ENCODE measurements at regions of chr13 and their contacts with region 1.

Region 1: DNA sequence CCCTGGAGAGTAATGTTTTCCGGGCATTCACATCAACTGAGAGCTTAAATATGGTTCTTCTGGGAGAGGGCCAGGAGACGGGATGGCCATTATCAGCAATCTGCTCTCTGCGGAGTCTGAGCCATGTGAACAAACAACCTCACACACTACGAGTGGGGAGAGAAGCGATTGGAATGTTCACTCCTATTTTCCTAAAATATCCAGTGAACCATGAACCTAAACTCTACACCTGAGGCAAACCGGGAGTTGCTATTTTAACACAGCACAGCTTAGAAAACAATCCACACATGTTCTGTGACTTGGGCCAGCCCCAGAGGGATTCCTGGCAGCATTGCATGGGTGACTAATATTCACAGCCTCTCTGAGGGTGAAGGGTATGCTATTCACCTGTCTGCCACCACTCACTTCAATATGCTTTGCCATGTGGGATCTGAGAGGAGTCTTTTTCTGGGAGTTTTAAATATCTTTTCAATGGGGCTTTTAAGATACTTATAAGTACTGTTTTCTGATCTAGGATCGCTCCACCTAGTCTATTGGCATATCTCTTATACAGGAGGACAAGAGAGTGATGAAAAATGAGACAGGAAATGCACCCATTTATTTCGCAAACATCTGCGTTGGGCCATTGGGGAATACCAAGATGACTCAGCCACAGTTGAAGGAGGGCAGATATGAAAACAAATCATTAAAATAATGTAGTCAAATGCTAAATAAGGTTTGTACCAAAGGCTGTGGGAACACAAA is 72.6 kb upstream of the SERP2 start:
- DNase-seq: peak; percentile 53 to 85
- H3K4me3 ChIP-seq: no peak overlapping the region
- H3K27ac ChIP-seq: peak overlapping the region; percentile 77 to 88
- H3K4me1 ChIP-seq: peaks cover 33 to 61% of the 10 kb centered on the region in 2 donors
- H3K27me3 ChIP-seq: no peaks in the 10 kb centered on the region
- CTCF ChIP-seq: no peak

Region 2: GRCh38 chr13:44237276-44237767 is 63.7 kb before region 1 on chr13:
- intact Hi-C with region 1: loop called (anchors 2 kb)
- DNase-seq: peak; percentile 64 to 92
- H3K4me3 ChIP-seq: no peak overlapping the region
- H3K27ac ChIP-seq: peak overlapping the region; percentile 86 to 92
- H3K4me1 ChIP-seq: peaks cover 9 to 19% of the 10 kb centered on the region in 2 donors
- H3K27me3 ChIP-seq: no peaks in the 10 kb centered on the region
- CTCF ChIP-seq: no peak

Region 3: DNA sequence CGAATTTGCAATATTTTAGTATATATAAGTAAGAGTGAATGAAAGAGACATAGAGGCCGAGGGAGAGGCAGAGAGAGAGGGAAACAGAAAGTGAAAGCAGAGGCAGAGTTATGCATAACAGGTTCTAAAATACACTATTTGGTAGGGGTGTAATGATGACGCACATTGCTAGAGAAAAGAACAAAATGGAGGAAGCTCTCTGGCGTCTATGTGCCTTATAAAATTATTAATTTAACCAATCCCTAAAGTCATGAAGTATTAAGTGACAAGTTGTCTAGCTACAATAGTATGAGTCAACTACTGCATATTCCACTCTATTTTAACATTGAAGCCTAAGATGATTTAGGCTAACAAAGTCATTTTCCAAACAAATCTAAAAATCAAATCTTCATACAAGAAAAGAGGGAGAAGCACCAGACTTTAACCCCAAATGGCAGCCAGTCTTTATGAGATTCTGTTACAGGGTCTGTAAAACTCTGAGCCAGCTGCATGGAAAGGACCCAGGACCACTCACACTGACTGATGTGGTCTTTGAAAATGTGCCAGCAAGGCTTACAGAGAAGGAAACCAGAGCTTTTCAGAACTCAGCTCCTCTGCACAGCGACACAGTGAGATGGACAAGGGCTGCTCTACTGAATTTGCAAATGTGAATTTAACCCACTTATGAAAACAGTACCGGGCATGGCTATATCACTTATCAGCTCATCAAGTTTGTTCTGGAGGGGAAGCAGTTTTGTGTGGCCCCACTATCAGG is 26.4 kb before region 1 on chr13:
- intact Hi-C with region 1: loop called (anchors 1 kb)
- DNase-seq: no peak
- H3K4me3 ChIP-seq: peak overlapping the region; percentile 44 to 55
- H3K27ac ChIP-seq: peak overlapping the region; percentile 88 to 92
- H3K4me1 ChIP-seq: peaks cover 9 to 45% of the 10 kb centered on the region in 2 donors
- H3K27me3 ChIP-seq: no peaks in the 10 kb centered on the region
- CTCF ChIP-seq: no peak